ENCODE measurements at regions of chr9 and their contacts with region 1.

Region 1: GRCh38 chr9:127450830-127451724 is at the starts of genes LRSAM1 and RPL12:
- DNase-seq: peak; percentile 97 to 100 (median 99)
- ATAC-seq: peak; percentile 82
- H3K4me3 ChIP-seq: peak within 1 kb of the TSS; percentile 90 to 94
- H3K4me3 Mint-ChIP-seq: peak within 1 kb of the TSS; percentile 96
- H3K27ac ChIP-seq: peak within 1 kb of the TSS; percentile 85
- H3K27ac Mint-ChIP-seq: peak within 1 kb of the TSS; percentile 96
- H3K4me1 ChIP-seq: peaks cover 31% of the 10 kb centered on the region
- H3K4me1 Mint-ChIP-seq: peaks cover 44% of the 10 kb centered on the region
- H3K27me3 ChIP-seq: no peaks in the 10 kb centered on the region
- H3K27me3 Mint-ChIP-seq: no peaks in the 10 kb centered on the region
- CTCF ChIP-seq: peak; percentile 21
- total RNA-seq, gene LRSAM1: 11.7 to 14.0 TPM
- total RNA-seq, gene RPL12: 1,908 to 1,959 TPM

Region 2: DNA sequence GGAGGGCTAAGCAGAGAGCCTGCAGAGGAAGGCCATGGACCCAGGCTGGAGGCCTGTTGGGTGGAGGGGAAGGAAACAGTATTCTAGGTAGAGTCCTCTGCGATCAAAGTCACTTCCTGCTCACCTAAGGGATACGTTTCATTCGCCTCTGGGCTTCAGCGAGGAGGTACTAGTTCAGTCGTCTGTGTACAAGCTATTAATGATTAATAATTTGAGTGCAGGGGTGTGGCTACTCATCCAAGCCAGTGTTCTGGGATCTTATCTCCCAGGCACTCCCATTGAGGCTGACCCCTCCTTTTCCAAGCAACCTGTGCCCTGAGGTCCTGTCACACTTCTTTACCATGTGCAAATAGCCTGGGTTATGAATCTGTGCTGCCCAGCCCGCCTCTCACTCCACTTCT is 511.3 kb before region 1 on chr9:
- CTCF ChIA-PET with region 1: interaction called, 4 read pairs
- POLR2A ChIA-PET with region 1: no interaction called
- intact Hi-C with region 1: loop called in 1 of 2 experiments (anchors 5 kb)
- DNase-seq: no peak
- ATAC-seq: no peak
- H3K4me3 ChIP-seq: no peak overlapping the region
- H3K4me3 Mint-ChIP-seq: no peak overlapping the region
- H3K27ac ChIP-seq: no peak overlapping the region
- H3K27ac Mint-ChIP-seq: no peak overlapping the region
- H3K4me1 ChIP-seq: no peaks in the 10 kb centered on the region
- H3K4me1 Mint-ChIP-seq: peaks cover 6% of the 10 kb centered on the region
- H3K27me3 ChIP-seq: no peaks in the 10 kb centered on the region
- H3K27me3 Mint-ChIP-seq: peaks cover 8% of the 10 kb centered on the region
- CTCF ChIP-seq: no peak

Region 3: GRCh38 chr9:127224178-127224882 is 226.7 kb before region 1 on chr9:
- CTCF ChIA-PET with region 1: no interaction called
- POLR2A ChIA-PET with region 1: interaction called, 11 read pairs
- intact Hi-C with region 1: loop called (anchors 1 to 2 kb)
- DNase-seq: peak; percentile 75 to 91 (median 89)
- ATAC-seq: peak; percentile 82
- H3K4me3 ChIP-seq: peak overlapping the region; percentile 66 to 72
- H3K4me3 Mint-ChIP-seq: peak overlapping the region; percentile 82
- H3K27ac ChIP-seq: peak overlapping the region in 1 of 2 experiments; percentile 53
- H3K27ac Mint-ChIP-seq: peak overlapping the region; percentile 77
- H3K4me1 ChIP-seq: peaks cover 33% of the 10 kb centered on the region
- H3K4me1 Mint-ChIP-seq: peaks cover 42% of the 10 kb centered on the region
- H3K27me3 ChIP-seq: no peaks in the 10 kb centered on the region
- H3K27me3 Mint-ChIP-seq: peaks cover 2% of the 10 kb centered on the region
- CTCF ChIP-seq: no peak

Region 4: GRCh38 chr9:127283917-127284316 is 167.2 kb before region 1 on chr9:
- CTCF ChIA-PET with region 1: no interaction called
- POLR2A ChIA-PET with region 1: no interaction called
- intact Hi-C with region 1: loop called in 1 of 2 experiments (anchors 10 kb)
- DNase-seq: peak in 5 of 9 experiments; percentile 3 to 50 (median 24)
- ATAC-seq: no peak
- H3K4me3 ChIP-seq: no peak overlapping the region
- H3K4me3 Mint-ChIP-seq: no peak overlapping the region
- H3K27ac ChIP-seq: no peak overlapping the region
- H3K27ac Mint-ChIP-seq: no peak overlapping the region
- H3K4me1 ChIP-seq: no peaks in the 10 kb centered on the region
- H3K4me1 Mint-ChIP-seq: no peaks in the 10 kb centered on the region
- H3K27me3 ChIP-seq: no peaks in the 10 kb centered on the region
- H3K27me3 Mint-ChIP-seq: peaks cover 40% of the 10 kb centered on the region
- CTCF ChIP-seq: no peak

Region 5: GRCh38 chr9:127388037-127388855 is 62.8 kb before region 1 on chr9:
- CTCF ChIA-PET with region 1: no interaction called
- POLR2A ChIA-PET with region 1: interaction called, 10 read pairs
- intact Hi-C with region 1: no loop called
- DNase-seq: peak; percentile 73 to 96 (median 84)
- ATAC-seq: peak; percentile 97
- H3K4me3 ChIP-seq: no peak overlapping the region
- H3K4me3 Mint-ChIP-seq: peak overlapping the region; percentile 4
- H3K27ac ChIP-seq: no peak overlapping the region
- H3K27ac Mint-ChIP-seq: peak overlapping the region; percentile 7
- H3K4me1 ChIP-seq: peaks cover 18% of the 10 kb centered on the region
- H3K4me1 Mint-ChIP-seq: peaks cover 26% of the 10 kb centered on the region
- H3K27me3 ChIP-seq: peaks cover 28 to 61% of the 10 kb centered on the region in 2 experiments
- H3K27me3 Mint-ChIP-seq: peaks cover 66% of the 10 kb centered on the region
- CTCF ChIP-seq: no peak

Region 6: GRCh38 chr9:127423934-127424675 is 27.0 kb before region 1 on chr9 and contains the start of gene ZNF79:
- CTCF ChIA-PET with region 1: interaction called, 3 read pairs
- POLR2A ChIA-PET with region 1: interaction called, 27 read pairs
- intact Hi-C with region 1: loop called (anchors 1 kb)
- DNase-seq: peak; percentile 81 to 94 (median 91)
- ATAC-seq: peak; percentile 84
- H3K4me3 ChIP-seq: peak within 1 kb of the TSS; percentile 71 to 98
- H3K4me3 Mint-ChIP-seq: peak within 1 kb of the TSS; percentile 99
- H3K27ac ChIP-seq: peak within 1 kb of the TSS; percentile 67 to 72
- H3K27ac Mint-ChIP-seq: peak within 1 kb of the TSS; percentile 95
- H3K4me1 ChIP-seq: peaks cover 25% of the 10 kb centered on the region
- H3K4me1 Mint-ChIP-seq: peaks cover 44% of the 10 kb centered on the region
- H3K27me3 ChIP-seq: no peaks in the 10 kb centered on the region
- H3K27me3 Mint-ChIP-seq: no peaks in the 10 kb centered on the region
- CTCF ChIP-seq: no peak
- total RNA-seq, gene ZNF79: 7.5 to 7.7 TPM

Region 7: DNA sequence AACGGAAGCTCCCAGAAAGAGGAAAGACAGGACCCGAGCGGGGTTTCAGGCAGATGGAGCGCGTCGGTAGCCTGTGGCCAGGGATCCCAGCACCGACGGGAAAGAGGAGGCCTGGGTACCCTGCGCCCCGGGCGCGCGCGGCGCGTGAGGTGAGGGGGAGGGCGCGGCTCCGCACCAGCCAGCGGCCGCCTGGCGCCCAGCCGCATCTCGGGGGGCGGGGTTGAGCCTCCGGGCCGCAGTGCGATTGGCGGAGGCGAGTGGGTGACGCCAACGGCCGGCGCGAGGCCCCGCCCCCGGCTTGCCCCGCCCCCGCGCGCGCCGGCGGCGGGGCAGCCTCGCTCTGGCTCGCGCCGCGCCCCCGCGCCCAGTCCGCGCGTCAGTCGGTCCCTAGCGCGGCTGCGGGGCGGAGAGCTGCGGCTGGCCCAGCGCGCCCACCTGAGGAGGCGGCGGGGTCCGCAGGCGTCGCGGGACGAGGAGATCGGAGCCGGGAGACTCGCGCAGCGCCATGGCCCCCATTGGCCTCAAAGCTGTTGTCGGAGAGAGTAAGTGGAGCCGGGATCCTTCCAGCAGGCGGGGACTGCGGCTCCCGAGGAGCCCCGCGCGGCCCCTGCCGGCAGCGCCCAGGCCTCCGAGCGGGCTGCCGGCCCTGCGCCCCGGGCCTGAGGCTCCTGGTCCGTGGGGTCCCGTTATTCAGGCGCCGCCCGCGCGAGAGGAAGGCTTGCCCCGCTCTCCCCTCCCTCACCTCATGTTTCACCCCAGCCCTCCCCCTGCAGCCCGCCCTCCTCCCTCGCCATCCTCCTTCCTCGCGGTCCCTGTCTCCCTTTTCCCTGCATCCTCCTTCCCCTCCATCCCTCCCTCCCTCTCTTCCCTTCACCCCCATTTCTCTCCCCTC is 161.1 kb after region 1 on chr9 and contains the start of gene STXBP1:
- CTCF ChIA-PET with region 1: no interaction called
- POLR2A ChIA-PET with region 1: interaction called, 5 read pairs
- intact Hi-C with region 1: loop called (anchors 2 kb)
- DNase-seq: peak; percentile 70 to 92 (median 83)
- ATAC-seq: peak; percentile 80
- H3K4me3 ChIP-seq: peak within 1 kb of the TSS; percentile 59 to 82
- H3K4me3 Mint-ChIP-seq: peak within 1 kb of the TSS; percentile 93
- H3K27ac ChIP-seq: peak within 1 kb of the TSS in 1 of 2 experiments; percentile 42
- H3K27ac Mint-ChIP-seq: peak within 1 kb of the TSS; percentile 92
- H3K4me1 ChIP-seq: peaks cover 32% of the 10 kb centered on the region
- H3K4me1 Mint-ChIP-seq: peaks cover 36% of the 10 kb centered on the region
- H3K27me3 ChIP-seq: peaks cover 4 to 9% of the 10 kb centered on the region in 2 experiments
- H3K27me3 Mint-ChIP-seq: peaks cover 9% of the 10 kb centered on the region
- CTCF ChIP-seq: no peak
- total RNA-seq, gene STXBP1: 7.7 to 8.9 TPM